Heart right ventricle (tissue), 16 donors: ENCODE measurements at regions of chr5 and their contacts with region 1.

Region 1: GRCh38 chr5:11619339-11620024 is 284.8 kb downstream of the CTNND2 start:
- DNase-seq: no peak
- ATAC-seq: peak in 5 of 8 donors; percentile 46 to 82 (median 75)
- H3K4me3 ChIP-seq: no peak overlapping the region
- H3K27ac ChIP-seq: no peak overlapping the region
- H3K4me1 ChIP-seq: peaks cover 0 to 12% (median 0%) of the 10 kb centered on the region in 9 donors
- H3K27me3 ChIP-seq: no peaks in the 10 kb centered on the region
- CTCF ChIP-seq: peak in 7 of 9 donors; percentile 23 to 60 (median 47)

Region 2: DNA sequence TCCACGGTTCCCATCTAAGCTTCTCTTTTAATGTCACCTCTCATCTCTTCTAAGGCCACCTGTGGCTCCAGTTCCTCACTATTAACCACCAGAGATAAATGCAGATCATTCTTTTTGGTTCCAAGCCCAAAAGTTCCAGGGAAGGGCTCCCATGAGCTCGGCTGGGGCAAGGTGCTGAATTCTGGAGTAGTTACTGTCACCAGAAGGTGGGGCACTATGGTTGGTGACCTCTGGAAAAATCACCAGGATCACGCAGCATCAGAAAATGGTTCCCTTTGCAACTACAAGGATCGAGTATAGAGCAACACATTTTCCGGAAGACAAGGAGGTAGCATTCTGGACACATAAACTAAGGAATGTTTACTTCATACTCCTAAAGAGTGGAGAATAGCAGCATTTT is 329.7 kb before region 1 on chr5:
- intact Hi-C with region 1: loop called in 1 of 10 experiments (anchors 10 kb)
- DNase-seq: no peak
- ATAC-seq: peak in 1 of 8 donors; percentile 17
- H3K4me3 ChIP-seq: no peak overlapping the region
- H3K27ac ChIP-seq: no peak overlapping the region
- H3K4me1 ChIP-seq: peaks cover 0 to 5% (median 0%) of the 10 kb centered on the region in 9 donors
- H3K27me3 ChIP-seq: no peaks in the 10 kb centered on the region
- CTCF ChIP-seq: no peak

Region 3: DNA sequence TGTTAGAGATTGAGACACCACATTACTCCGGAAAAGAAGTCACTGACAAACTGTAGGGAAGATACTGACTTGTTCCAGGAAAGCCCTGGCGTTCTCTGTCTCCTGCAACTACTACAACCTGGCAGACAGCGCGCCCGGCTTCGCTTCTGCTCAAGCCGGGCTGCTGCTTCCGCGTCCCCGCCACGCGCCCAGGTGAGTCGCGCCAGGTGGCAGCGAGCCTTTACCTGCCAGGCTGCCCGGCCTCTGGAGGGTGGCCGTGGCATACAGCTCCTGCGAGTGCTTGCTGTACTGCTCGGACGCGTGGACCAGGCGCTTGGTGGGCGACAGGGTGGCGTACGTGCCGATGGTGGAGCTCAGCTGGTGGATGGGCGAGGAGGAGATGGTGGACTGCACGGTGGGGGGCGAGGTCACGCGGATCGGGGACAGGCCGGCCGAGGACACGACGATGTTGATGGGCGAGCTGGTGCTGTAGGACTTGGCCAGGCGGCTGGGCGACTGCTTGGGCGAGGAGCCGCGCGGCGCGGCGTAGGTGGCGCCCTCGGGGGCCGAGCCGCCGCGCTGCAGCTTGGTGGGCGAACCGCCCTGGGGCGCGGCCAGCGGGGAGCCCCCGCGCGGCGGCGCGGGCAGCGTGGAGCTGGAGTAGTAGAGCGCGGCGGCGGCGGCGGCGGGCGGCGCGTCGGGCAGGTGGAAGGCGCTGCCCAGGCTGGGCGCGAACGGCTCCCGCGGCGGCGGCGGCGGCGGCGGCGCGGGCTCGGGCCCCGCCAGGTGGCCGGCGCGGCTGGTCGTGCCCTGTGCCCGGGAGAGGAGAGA is 234.8 kb before region 1 on chr5:
- intact Hi-C with region 1: loop called in 1 of 10 experiments (anchors 10 kb)
- DNase-seq: no peak
- ATAC-seq: peak in 7 of 8 donors; percentile 27 to 57 (median 34)
- H3K4me3 ChIP-seq: peak overlapping the region in 9 of 10 donors; percentile 5 to 45 (median 32)
- H3K27ac ChIP-seq: no peak overlapping the region
- H3K4me1 ChIP-seq: peaks cover 0 to 12% (median 0%) of the 10 kb centered on the region in 9 donors
- H3K27me3 ChIP-seq: peaks cover 0 to 47% (median 28%) of the 10 kb centered on the region in 7 donors
- CTCF ChIP-seq: no peak

Region 4: GRCh38 chr5:11429254-11429653 is 190.2 kb before region 1 on chr5:
- intact Hi-C with region 1: no loop called
- DNase-seq: no peak
- ATAC-seq: no peak
- H3K4me3 ChIP-seq: no peak overlapping the region
- H3K27ac ChIP-seq: no peak overlapping the region
- H3K4me1 ChIP-seq: no peaks in the 10 kb centered on the region
- H3K27me3 ChIP-seq: peaks cover 0 to 4% (median 0%) of the 10 kb centered on the region in 7 donors
- CTCF ChIP-seq: no peak

Region 5: GRCh38 chr5:11483630-11484029 is 135.9 kb before region 1 on chr5:
- intact Hi-C with region 1: no loop called
- DNase-seq: no peak
- ATAC-seq: no peak
- H3K4me3 ChIP-seq: no peak overlapping the region
- H3K27ac ChIP-seq: no peak overlapping the region
- H3K4me1 ChIP-seq: no peaks in the 10 kb centered on the region
- H3K27me3 ChIP-seq: no peaks in the 10 kb centered on the region
- CTCF ChIP-seq: no peak

Region 6: DNA sequence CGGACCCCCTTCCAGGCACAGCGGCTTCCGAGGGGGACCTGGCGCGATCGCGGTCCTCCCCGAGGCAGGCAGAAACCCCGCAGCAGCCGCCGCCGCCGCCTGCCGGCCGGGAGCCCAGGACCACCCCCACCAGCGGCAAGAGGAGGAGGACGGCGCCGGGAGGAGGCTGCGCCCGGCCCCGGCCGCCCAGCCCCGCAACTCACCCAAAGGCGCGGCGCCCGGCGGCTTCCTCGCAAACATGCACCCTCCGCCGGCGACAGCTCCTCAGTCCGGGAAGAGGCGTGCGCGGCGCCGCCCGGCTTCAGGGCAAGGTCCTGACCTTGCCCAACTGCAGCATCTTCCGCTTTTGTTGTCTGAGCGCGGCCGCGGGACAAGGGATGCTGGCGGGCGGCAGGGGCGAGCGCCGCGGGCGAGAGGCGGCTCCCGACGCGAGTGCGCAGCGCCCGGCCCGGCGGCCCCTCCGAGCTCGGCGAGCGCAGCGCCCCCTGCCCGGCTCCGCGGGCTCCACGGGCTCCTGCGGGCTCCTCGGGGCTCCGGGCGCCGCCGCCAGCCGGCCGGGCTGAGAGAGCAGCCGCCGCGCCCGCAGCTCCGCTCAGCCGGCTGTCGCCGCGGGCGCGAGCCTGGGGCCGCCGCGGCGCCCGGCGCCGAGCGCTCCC is 284.3 kb after region 1 on chr5:
- intact Hi-C with region 1: loop called in 1 of 10 experiments (anchors 5 kb)
- DNase-seq: peak in 1 of 2 donors; percentile 21
- ATAC-seq: peak in 7 of 8 donors; percentile 30 to 58 (median 40)
- H3K4me3 ChIP-seq: peak overlapping the region in 9 of 10 donors; percentile 27 to 62 (median 43)
- H3K27ac ChIP-seq: peak overlapping the region in 6 of 10 donors; percentile 10 to 73 (median 51)
- H3K4me1 ChIP-seq: no peaks in the 10 kb centered on the region
- H3K27me3 ChIP-seq: peaks cover 0 to 52% (median 45%) of the 10 kb centered on the region in 7 donors
- CTCF ChIP-seq: peak in 1 of 9 donors; percentile 14